ENCODE measurements at regions of chr12 and their contacts with region 1.

Region 1: GRCh38 chr12:2574355-2574935 is 220.3 kb upstream of the FKBP4 start:
- DNase-seq: no peak
- ATAC-seq: no peak

Region 2: DNA sequence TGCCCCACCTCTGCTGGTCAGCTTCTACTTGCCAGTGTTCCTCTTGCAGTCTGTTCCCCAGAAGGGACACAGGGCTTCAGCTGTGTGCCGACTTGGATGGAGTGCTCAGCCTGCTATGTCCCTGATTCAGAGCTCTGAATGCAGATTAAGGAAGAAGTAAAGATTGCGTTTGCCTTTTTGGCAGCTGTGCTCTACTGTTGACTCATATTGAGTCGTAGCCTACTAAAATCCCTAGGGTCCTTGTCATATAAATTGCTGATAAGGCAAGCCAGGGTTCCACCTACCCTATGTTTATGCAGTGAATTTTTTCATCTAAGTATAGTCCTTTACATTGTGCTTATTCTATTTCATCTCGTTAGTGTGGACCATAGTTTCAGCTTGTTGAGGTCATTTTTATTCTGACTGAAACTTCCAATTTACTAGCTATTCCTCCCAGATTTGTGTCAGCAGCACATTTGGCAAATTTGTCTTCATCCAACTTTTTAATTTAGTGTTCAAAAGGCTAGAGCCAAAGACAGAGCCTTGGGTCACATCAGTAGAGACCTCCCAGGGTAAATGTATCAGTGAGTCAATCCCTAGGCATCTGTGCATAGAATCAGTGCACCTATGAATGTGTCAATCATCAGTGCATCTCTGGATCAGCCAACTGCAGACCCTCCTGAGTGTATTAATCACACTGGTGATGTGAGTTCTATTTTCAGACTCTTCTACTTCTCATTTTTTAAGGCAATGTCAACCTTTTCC is 489.7 kb before region 1 on chr12:
- intact Hi-C with region 1: loop called in 1 of 2 experiments (anchors 10 kb)
- DNase-seq: no peak
- ATAC-seq: no peak

Region 3: DNA sequence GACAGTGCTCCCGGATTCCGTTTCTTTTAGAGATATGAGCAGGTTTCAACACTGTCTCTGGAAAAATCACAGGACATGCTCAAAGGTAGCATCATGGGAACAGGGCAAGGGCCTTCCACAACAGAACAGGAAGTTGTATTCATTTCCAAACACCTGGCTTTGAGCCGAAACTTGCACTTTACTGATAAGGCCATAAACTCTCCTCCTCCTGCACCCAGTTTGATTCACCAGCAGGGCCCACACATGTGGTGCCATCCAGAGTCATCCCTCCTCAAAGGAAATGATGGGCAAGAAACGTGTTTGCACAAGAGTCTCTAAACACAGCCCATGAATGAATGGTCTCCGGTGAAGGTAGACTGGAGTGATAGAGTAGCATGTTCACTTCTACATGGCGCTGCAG is 48.1 kb before region 1 on chr12:
- intact Hi-C with region 1: no loop called
- DNase-seq: peak in 1 of 2 donors; percentile 19
- ATAC-seq: peak; percentile 88

Region 4: GRCh38 chr12:3122835-3123678 is 548.6 kb after region 1 on chr12:
- intact Hi-C with region 1: no loop called
- DNase-seq: no peak
- ATAC-seq: no peak

Measured in left colon (tissue), 2 donors.